ENCODE measurements at regions of chr13 and their contacts with region 1.

Region 1: DNA sequence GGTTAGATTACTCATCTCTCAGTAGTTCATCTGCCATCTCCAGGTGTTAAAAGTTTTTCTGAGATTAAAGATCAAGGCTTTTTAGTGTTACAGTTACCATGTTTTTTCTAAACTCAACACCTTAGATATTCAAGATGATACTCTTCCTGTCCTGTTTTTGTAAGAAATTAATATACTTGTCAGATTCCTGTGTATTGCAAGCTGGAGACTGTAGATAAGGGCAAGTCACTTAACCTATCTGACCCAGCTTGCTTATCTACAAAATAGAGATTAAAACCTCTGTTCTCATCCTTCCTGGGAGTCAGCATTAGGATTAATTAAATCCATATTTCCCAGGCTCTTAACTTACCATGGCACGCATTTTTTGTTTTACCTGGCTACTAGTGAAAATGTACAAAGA is 25.2 kb downstream of the SUGT1 start:
- DNase-seq: no peak
- ATAC-seq: no peak
- H3K4me3 Mint-ChIP-seq: no peak overlapping the region
- H3K27ac Mint-ChIP-seq: no peak overlapping the region
- H3K4me1 Mint-ChIP-seq: no peaks in the 10 kb centered on the region
- H3K27me3 Mint-ChIP-seq: no peaks in the 10 kb centered on the region
- CTCF ChIP-seq: no peak

Region 2: GRCh38 chr13:52665325-52665724 is 12.5 kb before region 1 on chr13:
- CTCF ChIA-PET with region 1: interaction called, 11 read pairs
- POLR2A ChIA-PET with region 1: no interaction called
- intact Hi-C with region 1: no loop called
- DNase-seq: no peak
- ATAC-seq: peak; percentile 45
- H3K4me3 Mint-ChIP-seq: no peak overlapping the region
- H3K27ac Mint-ChIP-seq: no peak overlapping the region
- H3K4me1 Mint-ChIP-seq: peaks cover 2% of the 10 kb centered on the region
- H3K27me3 Mint-ChIP-seq: no peaks in the 10 kb centered on the region
- CTCF ChIP-seq: peak; percentile 55

Region 3: DNA sequence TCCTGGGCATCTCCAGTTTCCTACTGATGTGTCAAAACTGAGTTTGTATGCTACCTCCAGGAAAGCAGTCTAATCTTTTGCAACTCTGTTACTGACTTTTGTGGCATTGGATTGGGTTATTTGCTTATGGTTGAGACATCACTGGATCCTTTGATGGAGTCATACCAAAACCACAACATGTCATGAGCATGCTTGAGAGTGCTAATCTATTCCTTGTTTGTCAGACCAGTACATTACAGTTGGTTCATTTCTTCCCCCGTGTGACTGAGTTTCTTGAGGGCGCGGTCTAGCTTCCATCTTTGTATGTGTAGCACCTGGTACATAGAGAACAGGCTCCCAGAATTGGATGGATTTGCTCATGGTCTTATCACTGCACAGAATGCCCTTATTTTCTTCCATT is 18.0 kb after region 1 on chr13:
- CTCF ChIA-PET with region 1: no interaction called
- POLR2A ChIA-PET with region 1: no interaction called
- intact Hi-C with region 1: no loop called
- DNase-seq: peak; percentile 29
- ATAC-seq: peak; percentile 79
- H3K4me3 Mint-ChIP-seq: no peak overlapping the region
- H3K27ac Mint-ChIP-seq: no peak overlapping the region
- H3K4me1 Mint-ChIP-seq: peaks cover 9% of the 10 kb centered on the region
- H3K27me3 Mint-ChIP-seq: no peaks in the 10 kb centered on the region
- CTCF ChIP-seq: no peak